IMR-90 (cell line): ENCODE measurements at regions of chr15 and their contacts with region 1.

Region 1: GRCh38 chr15:68550481-68551295 is 28.1 kb upstream of the CORO2B start:
- DNase-seq: peak; percentile 44
- ATAC-seq: peak; percentile 67
- H3K4me3 ChIP-seq: no peak overlapping the region
- H3K27ac ChIP-seq: no peak overlapping the region
- H3K4me1 ChIP-seq: peaks cover 5% of the 10 kb centered on the region
- H3K27me3 ChIP-seq: peaks cover 2% of the 10 kb centered on the region
- CTCF ChIP-seq: peak; percentile 72
- POLR2A ChIP-seq: no peak
- RAD21 ChIP-seq: peak; percentile 71

Region 2: DNA sequence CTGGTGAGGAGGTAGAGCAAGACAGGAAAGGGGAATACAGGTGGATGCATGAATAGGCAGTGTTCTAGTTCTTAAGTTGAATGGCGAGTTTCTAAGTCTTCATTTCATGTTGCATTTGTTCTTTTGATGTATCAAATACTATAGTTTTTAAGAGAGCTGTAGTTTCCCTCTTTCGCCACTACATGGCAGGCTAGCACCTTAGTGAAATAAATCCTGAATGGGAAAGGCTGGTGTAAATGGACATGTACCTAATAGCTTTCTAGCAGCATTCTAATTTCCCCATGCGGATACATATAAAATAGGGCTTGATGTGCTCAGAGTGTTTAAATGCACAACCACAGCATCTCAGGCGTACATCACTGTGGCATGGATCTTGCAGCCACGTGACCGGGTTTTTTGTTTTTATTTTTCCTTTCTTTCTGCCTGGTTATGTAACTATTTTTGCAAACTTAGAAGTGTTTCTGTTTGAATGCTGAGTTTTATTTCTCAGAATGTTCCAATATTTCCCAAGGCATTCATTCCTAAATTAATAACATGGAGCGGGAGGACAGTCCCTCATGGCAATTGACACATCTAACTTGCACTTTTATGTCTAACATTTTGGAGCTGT is 297.7 kb before region 1 on chr15:
- CTCF ChIA-PET with region 1: interaction called, 8 read pairs
- POLR2A ChIA-PET with region 1: no interaction called
- dilution Hi-C with region 1: no loop called
- in situ Hi-C with region 1: no loop called
- intact Hi-C with region 1: loop called (anchors 5 kb)
- DNase-seq: peak; percentile 85
- ATAC-seq: peak; percentile 79
- H3K4me3 ChIP-seq: no peak overlapping the region
- H3K27ac ChIP-seq: no peak overlapping the region
- H3K4me1 ChIP-seq: no peaks in the 10 kb centered on the region; the same call in 1 of the 2 replicates
- H3K27me3 ChIP-seq: peaks cover 2% of the 10 kb centered on the region; the same call in 1 of the 2 replicates
- CTCF ChIP-seq: peak; percentile 91
- POLR2A ChIP-seq: no peak
- RAD21 ChIP-seq: peak; percentile 91

Region 3: DNA sequence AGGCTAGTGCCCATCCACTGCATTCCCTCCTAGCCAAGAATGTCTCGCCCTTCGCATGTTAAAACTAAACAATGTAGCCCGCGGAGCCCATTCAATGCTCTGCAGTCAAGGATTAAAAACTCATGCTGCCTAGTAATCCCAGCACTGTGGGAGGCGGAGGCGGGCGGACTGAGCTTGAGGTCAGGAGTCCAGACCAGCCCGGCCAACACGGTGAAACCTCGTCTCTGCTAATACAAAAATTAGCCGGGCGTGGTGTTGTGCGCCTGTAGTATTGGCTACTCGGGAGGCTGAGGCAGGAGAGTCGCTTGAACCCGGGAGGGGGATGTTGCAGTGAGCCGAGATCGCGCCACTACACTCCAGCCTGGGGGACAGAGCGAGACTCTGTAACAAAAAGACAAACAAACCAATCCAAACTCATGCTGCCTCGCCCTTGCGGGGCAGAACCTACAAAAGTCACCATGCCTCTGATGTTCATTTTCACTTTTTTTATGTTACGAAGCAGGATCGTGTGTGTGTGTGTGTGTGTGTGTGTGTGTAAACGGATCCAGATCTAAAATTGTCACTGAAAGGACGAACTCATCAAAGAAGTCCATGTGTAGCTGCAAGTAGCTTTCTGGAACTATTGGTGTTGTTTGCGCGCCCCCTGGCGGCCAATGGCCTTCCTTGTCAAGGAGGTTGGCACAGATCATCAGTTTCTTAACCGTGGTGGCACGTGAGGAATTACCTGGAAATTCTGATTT is 324.9 kb after region 1 on chr15:
- CTCF ChIA-PET with region 1: interaction called, 4 read pairs
- POLR2A ChIA-PET with region 1: no interaction called
- dilution Hi-C with region 1: no loop called
- in situ Hi-C with region 1: loop called (anchors 5 kb)
- intact Hi-C with region 1: loop called (anchors 1 kb)
- DNase-seq: peak; percentile 88
- ATAC-seq: peak; percentile 92
- H3K4me3 ChIP-seq: peak overlapping the region; percentile 28
- H3K27ac ChIP-seq: no peak overlapping the region
- H3K4me1 ChIP-seq: no peaks in the 10 kb centered on the region
- H3K27me3 ChIP-seq: peaks cover 24% of the 10 kb centered on the region
- CTCF ChIP-seq: peak; percentile 92
- POLR2A ChIP-seq: no peak
- RAD21 ChIP-seq: peak; percentile 96